ENCODE measurements at regions of chr3 and their contacts with region 1.

Region 1: GRCh38 chr3:126954141-126954842 is 28.6 kb upstream of the PLXNA1 start:
- DNase-seq: no peak
- ATAC-seq: peak; percentile 75
- H3K4me3 ChIP-seq: peak overlapping the region in 2 of 5 experiments; percentile 7 to 29
- H3K4me3 Mint-ChIP-seq: peak overlapping the region; percentile 69
- H3K27ac ChIP-seq: peak overlapping the region; percentile 78 to 87
- H3K27ac Mint-ChIP-seq: peak overlapping the region; percentile 91
- H3K4me1 ChIP-seq: peaks cover 13 to 27% of the 10 kb centered on the region in 2 donors
- H3K4me1 Mint-ChIP-seq: peaks cover 44% of the 10 kb centered on the region
- H3K27me3 ChIP-seq: no peaks in the 10 kb centered on the region
- H3K27me3 Mint-ChIP-seq: no peaks in the 10 kb centered on the region
- CTCF ChIP-seq: no peak

Region 2: DNA sequence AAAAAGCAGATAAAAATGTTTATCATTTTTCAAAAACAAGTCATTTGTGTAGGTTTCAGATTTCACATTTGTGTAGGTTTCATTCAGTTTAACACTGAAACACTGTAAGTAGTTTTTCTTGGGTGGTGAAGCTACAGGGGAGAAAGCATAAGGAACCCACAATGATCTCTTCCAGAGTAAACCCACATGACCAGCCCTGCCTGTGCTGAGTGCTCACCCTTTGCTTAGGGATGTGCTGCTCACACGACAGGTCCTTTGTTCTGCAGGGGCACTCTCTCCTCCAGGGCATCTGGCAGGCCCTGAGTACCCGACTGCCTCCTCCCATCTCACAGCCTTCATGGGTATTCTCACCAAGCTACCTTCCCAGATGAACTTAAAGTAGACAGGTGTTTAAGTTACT is 507.5 kb before region 1 on chr3:
- CTCF ChIA-PET with region 1: no interaction called
- POLR2A ChIA-PET with region 1: no interaction called
- intact Hi-C with region 1: no loop called
- DNase-seq: no peak
- ATAC-seq: no peak
- H3K4me3 ChIP-seq: no peak overlapping the region
- H3K4me3 Mint-ChIP-seq: no peak overlapping the region
- H3K27ac ChIP-seq: no peak overlapping the region
- H3K27ac Mint-ChIP-seq: no peak overlapping the region
- H3K4me1 ChIP-seq: no peaks in the 10 kb centered on the region
- H3K4me1 Mint-ChIP-seq: no peaks in the 10 kb centered on the region
- H3K27me3 ChIP-seq: no peaks in the 10 kb centered on the region
- H3K27me3 Mint-ChIP-seq: no peaks in the 10 kb centered on the region
- CTCF ChIP-seq: no peak

Region 3: DNA sequence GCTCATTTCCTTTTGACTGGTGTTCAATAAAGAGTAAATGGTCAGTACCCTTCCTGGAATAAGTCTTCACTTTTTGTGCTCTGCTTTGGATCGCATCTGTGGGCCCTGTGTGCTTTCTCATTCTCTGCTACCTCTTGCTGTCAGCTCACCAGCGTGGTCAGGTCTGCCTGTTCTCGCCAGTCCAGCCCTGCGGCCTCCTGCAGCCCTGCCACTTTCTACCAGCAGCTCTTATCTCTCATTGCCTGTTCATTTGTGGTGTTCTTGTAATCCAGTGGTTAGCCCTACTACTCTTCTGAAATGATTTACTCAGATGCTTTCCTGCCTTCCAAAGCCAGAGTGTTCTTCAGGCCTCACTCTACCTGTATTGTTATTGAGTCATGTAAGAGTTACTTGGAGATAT is 195.4 kb before region 1 on chr3:
- CTCF ChIA-PET with region 1: no interaction called
- POLR2A ChIA-PET with region 1: no interaction called
- intact Hi-C with region 1: no loop called
- DNase-seq: no peak
- ATAC-seq: no peak
- H3K4me3 ChIP-seq: no peak overlapping the region
- H3K4me3 Mint-ChIP-seq: no peak overlapping the region
- H3K27ac ChIP-seq: no peak overlapping the region
- H3K27ac Mint-ChIP-seq: no peak overlapping the region
- H3K4me1 ChIP-seq: peaks cover 0 to 5% of the 10 kb centered on the region in 2 donors
- H3K4me1 Mint-ChIP-seq: peaks cover 7% of the 10 kb centered on the region
- H3K27me3 ChIP-seq: no peaks in the 10 kb centered on the region
- H3K27me3 Mint-ChIP-seq: no peaks in the 10 kb centered on the region
- CTCF ChIP-seq: no peak

Region 4: GRCh38 chr3:126911162-126912026 is 42.9 kb before region 1 on chr3:
- CTCF ChIA-PET with region 1: interaction called, 6 read pairs
- POLR2A ChIA-PET with region 1: interaction called, 5 read pairs
- intact Hi-C with region 1: loop called (anchors 1 kb)
- DNase-seq: peak; percentile 91
- ATAC-seq: peak; percentile 95
- H3K4me3 ChIP-seq: peak overlapping the region in 2 of 5 experiments; percentile 7 to 42
- H3K4me3 Mint-ChIP-seq: peak overlapping the region; percentile 71
- H3K27ac ChIP-seq: peak overlapping the region in 1 of 2 donors; percentile 41
- H3K27ac Mint-ChIP-seq: peak overlapping the region; percentile 75
- H3K4me1 ChIP-seq: peaks cover 23 to 31% of the 10 kb centered on the region in 2 donors
- H3K4me1 Mint-ChIP-seq: peaks cover 38% of the 10 kb centered on the region
- H3K27me3 ChIP-seq: peaks cover 0 to 64% (median 18%) of the 10 kb centered on the region in 4 experiments
- H3K27me3 Mint-ChIP-seq: peaks cover 49% of the 10 kb centered on the region
- CTCF ChIP-seq: no peak

Region 5: GRCh38 chr3:126939338-126939718 is 15.0 kb before region 1 on chr3:
- CTCF ChIA-PET with region 1: no interaction called
- POLR2A ChIA-PET with region 1: no interaction called
- intact Hi-C with region 1: no loop called
- DNase-seq: no peak
- ATAC-seq: no peak
- H3K4me3 ChIP-seq: no peak overlapping the region
- H3K4me3 Mint-ChIP-seq: no peak overlapping the region
- H3K27ac ChIP-seq: no peak overlapping the region
- H3K27ac Mint-ChIP-seq: no peak overlapping the region
- H3K4me1 ChIP-seq: peaks cover 0 to 10% of the 10 kb centered on the region in 2 donors
- H3K4me1 Mint-ChIP-seq: peaks cover 13% of the 10 kb centered on the region
- H3K27me3 ChIP-seq: no peaks in the 10 kb centered on the region
- H3K27me3 Mint-ChIP-seq: peaks cover 5% of the 10 kb centered on the region
- CTCF ChIP-seq: no peak

Region 6: GRCh38 chr3:126971891-126972351 is 17.6 kb after region 1 on chr3:
- CTCF ChIA-PET with region 1: no interaction called
- POLR2A ChIA-PET with region 1: interaction called, 4 read pairs
- intact Hi-C with region 1: loop called (anchors 2 kb)
- DNase-seq: peak; percentile 50
- ATAC-seq: peak; percentile 72
- H3K4me3 ChIP-seq: no peak overlapping the region
- H3K4me3 Mint-ChIP-seq: peak overlapping the region; percentile 30
- H3K27ac ChIP-seq: no peak overlapping the region
- H3K27ac Mint-ChIP-seq: peak overlapping the region; percentile 56
- H3K4me1 ChIP-seq: peaks cover 3 to 4% of the 10 kb centered on the region in 2 donors
- H3K4me1 Mint-ChIP-seq: peaks cover 18% of the 10 kb centered on the region
- H3K27me3 ChIP-seq: peaks cover 0 to 16% (median 0%) of the 10 kb centered on the region in 4 experiments
- H3K27me3 Mint-ChIP-seq: peaks cover 34% of the 10 kb centered on the region
- CTCF ChIP-seq: no peak

Region 7: GRCh38 chr3:127015282-127016042 is 61.2 kb after region 1 on chr3:
- CTCF ChIA-PET with region 1: no interaction called
- POLR2A ChIA-PET with region 1: no interaction called
- intact Hi-C with region 1: no loop called
- DNase-seq: peak; percentile 30
- ATAC-seq: peak; percentile 65
- H3K4me3 ChIP-seq: no peak overlapping the region
- H3K4me3 Mint-ChIP-seq: no peak overlapping the region
- H3K27ac ChIP-seq: no peak overlapping the region
- H3K27ac Mint-ChIP-seq: peak overlapping the region; percentile 26
- H3K4me1 ChIP-seq: no peaks in the 10 kb centered on the region
- H3K4me1 Mint-ChIP-seq: peaks cover 5% of the 10 kb centered on the region
- H3K27me3 ChIP-seq: no peaks in the 10 kb centered on the region
- H3K27me3 Mint-ChIP-seq: no peaks in the 10 kb centered on the region
- CTCF ChIP-seq: no peak

Measured in B cell (primary cell).